BJ (cell line): ENCODE measurements at regions of chr12 and their contacts with region 1.

Region 1: DNA sequence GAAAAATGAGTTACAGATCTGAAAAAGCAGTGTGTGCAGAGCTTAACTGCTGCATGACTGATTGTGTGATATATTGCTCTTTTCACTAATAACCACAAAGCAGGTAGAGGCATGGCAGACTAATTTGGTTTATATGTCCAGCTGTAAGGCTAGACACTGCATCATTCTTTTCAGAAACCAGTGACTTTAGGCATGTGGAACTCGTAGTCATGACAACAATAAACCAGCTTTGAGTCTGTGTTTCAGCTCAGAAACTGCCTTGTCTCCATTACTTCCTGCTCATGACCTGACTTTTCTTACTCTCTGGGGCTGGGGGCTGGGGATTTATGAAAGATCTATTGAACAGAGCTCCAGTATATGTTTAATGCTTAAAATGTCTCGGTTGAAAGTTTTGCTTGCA is 146.8 kb upstream of the LRIG3 start:
- DNase-seq: peak; percentile 35
- H3K4me3 ChIP-seq: no peak overlapping the region
- H3K27me3 ChIP-seq: no peaks in the 10 kb centered on the region
- CTCF ChIP-seq: no peak

Region 2: GRCh38 chr12:58988643-58989344 is 78.3 kb before region 1 on chr12:
- CTCF ChIA-PET with region 1: no interaction called
- POLR2A ChIA-PET with region 1: no interaction called
- DNase-seq: no peak
- H3K4me3 ChIP-seq: no peak overlapping the region
- H3K27me3 ChIP-seq: no peaks in the 10 kb centered on the region
- CTCF ChIP-seq: no peak

Region 3: DNA sequence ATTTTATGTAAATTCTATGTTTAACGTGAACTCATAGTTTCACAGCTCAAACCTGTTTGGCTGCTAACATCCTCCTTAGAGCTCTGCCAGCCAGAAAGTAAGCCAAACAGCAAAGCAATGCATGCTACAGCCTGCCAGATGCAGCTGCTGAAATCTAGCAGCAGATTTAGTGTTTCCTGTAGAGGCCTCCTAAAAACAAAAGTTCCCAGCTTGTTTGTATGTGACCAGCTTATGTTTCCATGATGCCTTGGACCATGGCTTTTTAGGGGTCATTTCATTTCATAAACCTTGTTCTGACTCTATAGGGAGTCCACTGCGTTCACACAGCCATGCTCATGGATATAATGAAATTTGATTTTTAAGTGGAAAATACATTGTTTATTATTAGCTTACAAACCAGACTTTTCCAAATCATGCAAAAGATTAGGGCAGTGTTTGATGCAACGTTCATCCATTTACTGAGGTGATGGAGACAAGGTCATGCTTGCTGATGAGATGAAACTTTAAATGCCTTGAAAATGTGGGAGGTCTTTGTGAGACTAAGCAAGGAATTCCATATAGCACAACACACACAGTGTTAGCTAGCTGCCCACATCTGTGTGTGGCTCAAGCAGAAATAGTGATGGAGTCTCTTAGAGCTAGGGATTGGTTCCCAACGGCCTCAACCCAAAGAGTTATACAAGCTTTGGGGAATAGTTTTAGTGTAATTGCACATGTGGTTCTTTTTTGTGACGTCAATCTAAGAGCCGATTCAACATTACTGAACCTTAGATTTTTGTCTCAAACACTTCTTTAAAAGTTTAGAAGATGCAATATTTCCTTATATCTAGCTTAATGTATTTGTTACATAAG is 10.7 kb after region 1 on chr12:
- CTCF ChIA-PET with region 1: interaction called, 17 read pairs
- POLR2A ChIA-PET with region 1: no interaction called
- DNase-seq: no peak
- H3K4me3 ChIP-seq: no peak overlapping the region
- H3K27me3 ChIP-seq: no peaks in the 10 kb centered on the region
- CTCF ChIP-seq: no peak